Naive thymus-derived CD4-positive, alpha-beta T cell (primary cell): ENCODE measurements at regions of chr6 and their contacts with region 1.

Region 1: DNA sequence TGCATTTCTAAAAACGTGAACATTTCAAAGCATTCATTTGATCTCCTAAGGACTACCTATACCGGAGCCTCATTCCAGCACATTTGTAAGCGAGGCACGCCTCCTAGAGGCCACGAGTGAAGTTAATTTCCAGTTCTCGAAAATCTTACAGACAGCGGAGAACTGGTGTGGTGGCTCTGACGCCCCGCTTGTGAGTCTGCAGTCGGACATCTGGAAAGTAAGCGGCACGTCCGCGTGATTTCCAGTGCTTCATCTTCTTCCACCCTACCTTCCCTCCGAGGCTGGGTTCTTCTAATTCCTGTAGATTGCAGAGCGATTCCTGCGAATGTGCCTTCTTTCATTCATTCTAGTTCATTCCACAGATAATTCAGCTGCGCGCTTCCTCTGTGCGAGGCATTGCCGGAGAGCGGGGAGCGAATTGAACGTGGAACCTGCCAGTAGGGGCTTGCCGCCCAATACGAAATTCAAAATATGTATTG is 810 bp upstream of the PRIM2 start:
- DNase-seq: peak; percentile 63 to 87 (median 83)
- ATAC-seq: peak; percentile 92
- H3K4me3 ChIP-seq: peak overlapping the region; percentile 84
- H3K4me3 Mint-ChIP-seq: peak overlapping the region; percentile 90 to 100 (median 97)
- H3K27ac ChIP-seq: peak overlapping the region; percentile 66
- H3K27ac Mint-ChIP-seq: peak overlapping the region; percentile 87 to 98 (median 93)
- H3K4me1 ChIP-seq: peaks cover 0 to 9% of the 10 kb centered on the region in 2 donors
- H3K4me1 Mint-ChIP-seq: peaks cover 21 to 38% (median 33%) of the 10 kb centered on the region in 7 donors
- H3K27me3 ChIP-seq: no peaks in the 10 kb centered on the region
- H3K27me3 Mint-ChIP-seq: peaks cover 0 to 6% (median 0%) of the 10 kb centered on the region in 5 donors

Region 2: GRCh38 chr6:56359201-56359899 is 957.3 kb before region 1 on chr6:
- CTCF ChIA-PET with region 1: no interaction called
- POLR2A ChIA-PET with region 1: no interaction called
- intact Hi-C with region 1: loop called in 1 of 2 experiments (anchors 2 kb)
- DNase-seq: peak in 8 of 9 donors; percentile 32 to 68 (median 58)
- ATAC-seq: peak; percentile 82
- H3K4me3 ChIP-seq: no peak overlapping the region
- H3K4me3 Mint-ChIP-seq: no peak overlapping the region
- H3K27ac ChIP-seq: no peak overlapping the region
- H3K27ac Mint-ChIP-seq: no peak overlapping the region
- H3K4me1 ChIP-seq: no peaks in the 10 kb centered on the region
- H3K4me1 Mint-ChIP-seq: no peaks in the 10 kb centered on the region
- H3K27me3 ChIP-seq: no peaks in the 10 kb centered on the region
- H3K27me3 Mint-ChIP-seq: no peaks in the 10 kb centered on the region

Region 3: GRCh38 chr6:56699066-56699654 is 617.5 kb before region 1 on chr6:
- CTCF ChIA-PET with region 1: no interaction called
- POLR2A ChIA-PET with region 1: no interaction called
- intact Hi-C with region 1: loop called in 1 of 2 experiments (anchors 2 kb)
- DNase-seq: peak in 1 of 9 donors; percentile 8
- ATAC-seq: no peak
- H3K4me3 ChIP-seq: no peak overlapping the region
- H3K4me3 Mint-ChIP-seq: no peak overlapping the region
- H3K27ac ChIP-seq: no peak overlapping the region
- H3K27ac Mint-ChIP-seq: no peak overlapping the region
- H3K4me1 ChIP-seq: no peaks in the 10 kb centered on the region
- H3K4me1 Mint-ChIP-seq: peaks cover 0 to 2% (median 0%) of the 10 kb centered on the region in 7 donors
- H3K27me3 ChIP-seq: no peaks in the 10 kb centered on the region
- H3K27me3 Mint-ChIP-seq: peaks cover 0 to 7% (median 4%) of the 10 kb centered on the region in 5 donors

Region 4: GRCh38 chr6:56851541-56852259 is 464.9 kb before region 1 on chr6:
- CTCF ChIA-PET with region 1: no interaction called
- POLR2A ChIA-PET with region 1: no interaction called
- intact Hi-C with region 1: loop called in 1 of 2 experiments (anchors 5 kb)
- DNase-seq: peak in 5 of 9 donors; percentile 8 to 29 (median 24)
- ATAC-seq: peak; percentile 87
- H3K4me3 ChIP-seq: peak overlapping the region; percentile 13
- H3K4me3 Mint-ChIP-seq: peak overlapping the region; percentile 63 to 83 (median 81)
- H3K27ac ChIP-seq: no peak overlapping the region
- H3K27ac Mint-ChIP-seq: peak overlapping the region in 3 of 9 donors; percentile 15 to 67 (median 16)
- H3K4me1 ChIP-seq: no peaks in the 10 kb centered on the region
- H3K4me1 Mint-ChIP-seq: peaks cover 13 to 26% (median 25%) of the 10 kb centered on the region in 7 donors
- H3K27me3 ChIP-seq: peaks cover 0 to 3% of the 10 kb centered on the region in 2 donors
- H3K27me3 Mint-ChIP-seq: peaks cover 26 to 64% (median 52%) of the 10 kb centered on the region in 5 donors

Region 5: GRCh38 chr6:57021086-57021720 is 295.4 kb before region 1 on chr6:
- CTCF ChIA-PET with region 1: interaction called, 4 read pairs
- POLR2A ChIA-PET with region 1: no interaction called
- intact Hi-C with region 1: loop called (anchors 1 to 2 kb)
- DNase-seq: peak in 5 of 9 donors; percentile 7 to 35 (median 15)
- ATAC-seq: peak; percentile 76
- H3K4me3 ChIP-seq: no peak overlapping the region
- H3K4me3 Mint-ChIP-seq: no peak overlapping the region
- H3K27ac ChIP-seq: no peak overlapping the region
- H3K27ac Mint-ChIP-seq: no peak overlapping the region
- H3K4me1 ChIP-seq: no peaks in the 10 kb centered on the region
- H3K4me1 Mint-ChIP-seq: no peaks in the 10 kb centered on the region
- H3K27me3 ChIP-seq: no peaks in the 10 kb centered on the region
- H3K27me3 Mint-ChIP-seq: peaks cover 4 to 30% (median 11%) of the 10 kb centered on the region in 5 donors

Region 6: DNA sequence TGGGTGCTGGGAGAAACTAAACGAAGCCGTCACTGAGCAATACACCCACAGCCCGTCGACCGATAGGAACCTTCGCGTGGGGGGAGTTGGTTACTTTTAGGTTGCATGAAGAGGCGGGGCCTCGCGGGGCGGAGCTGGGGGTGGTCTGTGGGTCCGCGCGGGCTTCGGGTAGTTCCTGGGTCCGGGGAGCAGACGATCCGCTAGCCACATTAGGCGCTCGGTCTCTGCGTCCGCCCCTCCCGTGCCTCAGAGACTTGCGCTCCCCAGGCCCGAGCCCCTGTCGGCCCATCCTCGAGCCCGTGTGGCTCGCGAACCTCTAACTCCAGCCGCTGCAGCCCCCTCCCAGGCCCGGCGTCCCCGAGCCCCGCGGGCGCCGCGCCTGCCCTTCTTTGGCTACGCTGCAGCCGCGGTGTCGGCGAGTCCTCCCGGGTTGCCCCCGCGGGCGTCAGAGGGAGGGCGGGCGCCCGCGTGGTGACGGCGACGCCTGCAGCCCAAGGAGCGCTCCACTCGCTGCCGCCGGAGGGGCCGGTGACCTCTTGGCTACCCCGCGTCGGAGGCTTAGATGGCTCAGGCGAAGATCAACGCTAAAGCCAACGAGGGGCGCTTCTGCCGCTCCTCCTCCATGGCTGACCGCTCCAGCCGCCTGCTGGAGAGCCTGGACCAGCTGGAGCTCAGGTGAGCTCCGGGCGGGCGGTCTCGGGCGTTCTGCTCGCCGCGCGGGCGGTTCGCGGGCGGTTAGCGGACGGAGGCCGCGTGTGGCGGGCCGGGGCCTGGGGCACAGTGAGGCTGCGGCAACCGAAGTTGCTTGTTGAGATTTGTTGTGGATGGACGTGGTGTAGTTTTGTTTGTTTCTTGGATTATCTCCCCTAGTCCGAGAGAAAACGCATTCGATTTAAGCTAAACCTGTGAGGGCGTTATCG is 144.2 kb before region 1 on chr6 and contains the start of gene BAG2:
- CTCF ChIA-PET with region 1: interaction called, 3 read pairs
- POLR2A ChIA-PET with region 1: interaction called, 3 read pairs
- intact Hi-C with region 1: loop called (anchors 1 kb)
- DNase-seq: peak; percentile 75 to 91 (median 85)
- ATAC-seq: peak; percentile 91
- H3K4me3 ChIP-seq: peak within 1 kb of the TSS; percentile 57
- H3K4me3 Mint-ChIP-seq: peak within 1 kb of the TSS; percentile 88 to 99 (median 92)
- H3K27ac ChIP-seq: peak within 1 kb of the TSS; percentile 87
- H3K27ac Mint-ChIP-seq: peak within 1 kb of the TSS; percentile 90 to 99 (median 93)
- H3K4me1 ChIP-seq: peaks cover 4 to 12% of the 10 kb centered on the region in 2 donors
- H3K4me1 Mint-ChIP-seq: peaks cover 10 to 61% (median 56%) of the 10 kb centered on the region in 7 donors
- H3K27me3 ChIP-seq: no peaks in the 10 kb centered on the region
- H3K27me3 Mint-ChIP-seq: no peaks in the 10 kb centered on the region
- total RNA-seq, gene BAG2: 3.7 to 8.1 (median 5.1) TPM

Region 7: GRCh38 chr6:57267586-57268293 is 48.9 kb before region 1 on chr6:
- CTCF ChIA-PET with region 1: interaction called, 10 read pairs
- POLR2A ChIA-PET with region 1: no interaction called
- intact Hi-C with region 1: loop called (anchors 1 kb)
- DNase-seq: peak in 7 of 9 donors; percentile 2 to 38 (median 29)
- ATAC-seq: peak; percentile 54
- H3K4me3 ChIP-seq: no peak overlapping the region
- H3K4me3 Mint-ChIP-seq: no peak overlapping the region
- H3K27ac ChIP-seq: no peak overlapping the region
- H3K27ac Mint-ChIP-seq: no peak overlapping the region
- H3K4me1 ChIP-seq: no peaks in the 10 kb centered on the region
- H3K4me1 Mint-ChIP-seq: no peaks in the 10 kb centered on the region
- H3K27me3 ChIP-seq: no peaks in the 10 kb centered on the region
- H3K27me3 Mint-ChIP-seq: peaks cover 0 to 15% (median 6%) of the 10 kb centered on the region in 5 donors